ENCODE measurements at regions of chr22 and their contacts with region 1.

Region 1: GRCh38 chr22:37601540-37602442 is 6.8 kb upstream of the GGA1 start:
- DNase-seq: peak; percentile 87 to 91
- H3K4me3 ChIP-seq: peak overlapping the region; percentile 23
- H3K4me3 Mint-ChIP-seq: peak overlapping the region; percentile 72
- H3K27ac Mint-ChIP-seq: peak overlapping the region; percentile 85
- H3K4me1 ChIP-seq: peaks cover 14% of the 10 kb centered on the region
- H3K4me1 Mint-ChIP-seq: peaks cover 25% of the 10 kb centered on the region
- H3K27me3 ChIP-seq: no peaks in the 10 kb centered on the region
- H3K27me3 Mint-ChIP-seq: no peaks in the 10 kb centered on the region
- CTCF ChIP-seq: no peak

Region 2: GRCh38 chr22:37734964-37735451 is 133.2 kb after region 1 on chr22:
- CTCF ChIA-PET with region 1: no interaction called
- POLR2A ChIA-PET with region 1: interaction called, 19 read pairs
- intact Hi-C with region 1: no loop called
- DNase-seq: peak; percentile 75 to 77
- H3K4me3 ChIP-seq: no peak overlapping the region
- H3K4me3 Mint-ChIP-seq: no peak overlapping the region
- H3K27ac Mint-ChIP-seq: no peak overlapping the region
- H3K4me1 ChIP-seq: peaks cover 35% of the 10 kb centered on the region
- H3K4me1 Mint-ChIP-seq: peaks cover 13% of the 10 kb centered on the region
- H3K27me3 ChIP-seq: no peaks in the 10 kb centered on the region
- H3K27me3 Mint-ChIP-seq: no peaks in the 10 kb centered on the region
- CTCF ChIP-seq: peak; percentile 44 to 71

Measured in Caco-2 (cell line).